H1 (cell line): ENCODE measurements at regions of chr4 and their contacts with region 1.

Region 1: DNA sequence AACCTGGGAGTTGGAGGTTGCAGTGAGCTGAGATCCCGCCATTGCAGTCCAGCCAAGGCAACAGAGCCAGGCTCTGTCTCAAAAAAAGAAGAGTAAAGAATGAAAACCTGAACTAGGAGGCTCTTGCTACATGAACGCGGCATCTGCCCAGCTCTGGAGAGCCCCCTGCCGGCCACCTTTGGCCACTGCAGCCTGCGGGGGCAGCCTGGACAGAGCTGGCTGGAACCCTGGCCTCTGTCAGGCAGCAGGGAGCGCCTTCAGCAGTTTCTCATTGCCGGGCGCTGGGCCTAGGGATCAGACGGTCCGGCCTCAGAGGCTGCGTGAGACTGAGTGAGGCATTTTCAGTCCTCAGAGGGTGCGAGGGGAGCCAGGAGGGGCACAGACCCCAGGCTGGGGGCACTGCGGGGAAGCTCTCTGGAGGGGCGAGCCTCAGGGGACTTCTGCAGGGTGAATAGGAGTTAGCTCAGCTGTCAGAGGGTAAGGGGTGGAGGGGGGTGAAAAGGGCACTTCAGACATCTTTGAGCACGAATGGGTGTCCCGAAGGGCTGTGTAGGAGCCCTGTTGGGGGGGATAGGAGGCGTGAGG is 17.5 kb downstream of the DOK7 start:
- DNase-seq: peak; percentile 66 to 100
- H3K4me3 ChIP-seq: peak overlapping the region in 2 of 4 experiments; percentile 23 to 49; a peak in 4 of 8 replicates
- H3K27ac ChIP-seq: no peak overlapping the region
- H3K4me1 ChIP-seq: peaks cover 0 to 30% (median 22%) of the 10 kb centered on the region in 4 experiments; a peak in 6 of 7 replicates
- H3K27me3 ChIP-seq: peaks cover 7 to 69% (median 48%) of the 10 kb centered on the region in 4 experiments
- CTCF ChIP-seq: peak in 2 of 3 experiments; percentile 97 to 98; a peak in 3 of 4 replicates
- EP300 ChIP-seq: no peak
- POLR2A ChIP-seq: no peak
- RAD21 ChIP-seq: peak; percentile 78 to 88

Region 2: GRCh38 chr4:3179126-3179706 is 301.4 kb before region 1 on chr4:
- CTCF ChIA-PET with region 1: no interaction called
- POLR2A ChIA-PET with region 1: no interaction called
- DNase-seq: no peak
- H3K4me3 ChIP-seq: no peak overlapping the region
- H3K27ac ChIP-seq: no peak overlapping the region
- H3K4me1 ChIP-seq: no peaks in the 10 kb centered on the region
- H3K27me3 ChIP-seq: no peaks in the 10 kb centered on the region
- CTCF ChIP-seq: no peak
- EP300 ChIP-seq: no peak
- POLR2A ChIP-seq: no peak
- RAD21 ChIP-seq: no peak

Region 3: GRCh38 chr4:3318561-3319021 is 162.0 kb before region 1 on chr4:
- CTCF ChIA-PET with region 1: interaction called, 16 read pairs
- POLR2A ChIA-PET with region 1: no interaction called
- DNase-seq: peak; percentile 54 to 91
- H3K4me3 ChIP-seq: no peak overlapping the region
- H3K27ac ChIP-seq: 0 out of 2 replicates have a peak overlapping the region, but pooled peaks have one; percentile 39
- H3K4me1 ChIP-seq: peaks cover 0 to 5% (median 1%) of the 10 kb centered on the region in 4 experiments; a peak in 2 of 7 replicates
- H3K27me3 ChIP-seq: no peaks in the 10 kb centered on the region
- CTCF ChIP-seq: peak in 2 of 3 experiments; percentile 99; a peak in 3 of 4 replicates
- EP300 ChIP-seq: peak in 1 of 2 experiments; percentile 55; a peak in 1 of 3 replicates
- POLR2A ChIP-seq: no peak
- RAD21 ChIP-seq: peak; percentile 73 to 78

Region 4: GRCh38 chr4:3418029-3418762 is 62.4 kb before region 1 on chr4:
- CTCF ChIA-PET with region 1: interaction called, 31 read pairs
- POLR2A ChIA-PET with region 1: interaction called, 3 read pairs
- DNase-seq: no peak
- H3K4me3 ChIP-seq: no peak overlapping the region
- H3K27ac ChIP-seq: no peak overlapping the region
- H3K4me1 ChIP-seq: no peaks in the 10 kb centered on the region; a peak in 3 of 7 replicates
- H3K27me3 ChIP-seq: no peaks in the 10 kb centered on the region
- CTCF ChIP-seq: peak in 2 of 3 experiments; percentile 45 to 74; a peak in 3 of 4 replicates
- EP300 ChIP-seq: no peak
- POLR2A ChIP-seq: no peak
- RAD21 ChIP-seq: peak; percentile 32 to 43; a peak in 3 of 4 replicates

Region 5: GRCh38 chr4:3442959-3443749 is 37.5 kb before region 1 on chr4:
- CTCF ChIA-PET with region 1: interaction called, 40 read pairs
- POLR2A ChIA-PET with region 1: no interaction called
- DNase-seq: peak in 1 of 2 experiments; percentile 93
- H3K4me3 ChIP-seq: no peak overlapping the region
- H3K27ac ChIP-seq: no peak overlapping the region
- H3K4me1 ChIP-seq: no peaks in the 10 kb centered on the region
- H3K27me3 ChIP-seq: no peaks in the 10 kb centered on the region
- CTCF ChIP-seq: peak in 2 of 3 experiments; percentile 96 to 97; a peak in 3 of 4 replicates
- EP300 ChIP-seq: no peak
- POLR2A ChIP-seq: no peak
- RAD21 ChIP-seq: peak; percentile 96 to 97

Region 6: GRCh38 chr4:3470244-3471097 is 10.1 kb before region 1 on chr4:
- CTCF ChIA-PET with region 1: interaction called, 48 read pairs
- POLR2A ChIA-PET with region 1: interaction called, 4 read pairs
- DNase-seq: no peak
- H3K4me3 ChIP-seq: no peak overlapping the region
- H3K27ac ChIP-seq: no peak overlapping the region
- H3K4me1 ChIP-seq: peaks cover 0 to 3% (median 1%) of the 10 kb centered on the region in 4 experiments; a peak in 2 of 7 replicates
- H3K27me3 ChIP-seq: peaks cover 1 to 53% (median 34%) of the 10 kb centered on the region in 4 experiments; a peak in 6 of 7 replicates
- CTCF ChIP-seq: no peak
- EP300 ChIP-seq: no peak
- POLR2A ChIP-seq: no peak
- RAD21 ChIP-seq: no peak

Region 7: GRCh38 chr4:3514806-3515460 is 34.3 kb after region 1 on chr4:
- CTCF ChIA-PET with region 1: interaction called, 48 read pairs
- POLR2A ChIA-PET with region 1: interaction called, 4 read pairs
- DNase-seq: peak in 1 of 2 experiments; percentile 81
- H3K4me3 ChIP-seq: no peak overlapping the region
- H3K27ac ChIP-seq: no peak overlapping the region
- H3K4me1 ChIP-seq: 0 out of 7 replicates have a peak, but pooled peaks cover 0 to 2% (median under 1%) of the 10 kb centered on the region in 4 experiments
- H3K27me3 ChIP-seq: no peaks in the 10 kb centered on the region
- CTCF ChIP-seq: peak in 2 of 3 experiments; percentile 69 to 78; a peak in 3 of 4 replicates
- EP300 ChIP-seq: no peak
- POLR2A ChIP-seq: no peak
- RAD21 ChIP-seq: peak; percentile 57 to 67

Region 8: GRCh38 chr4:3605491-3605890 is 124.9 kb after region 1 on chr4:
- CTCF ChIA-PET with region 1: no interaction called
- POLR2A ChIA-PET with region 1: no interaction called
- DNase-seq: no peak
- H3K4me3 ChIP-seq: no peak overlapping the region
- H3K27ac ChIP-seq: no peak overlapping the region
- H3K4me1 ChIP-seq: no peaks in the 10 kb centered on the region
- H3K27me3 ChIP-seq: no peaks in the 10 kb centered on the region
- CTCF ChIP-seq: no peak
- EP300 ChIP-seq: no peak
- POLR2A ChIP-seq: no peak
- RAD21 ChIP-seq: no peak

Region 9: GRCh38 chr4:3776166-3777032 is 295.8 kb after region 1 on chr4:
- CTCF ChIA-PET with region 1: no interaction called
- POLR2A ChIA-PET with region 1: no interaction called
- DNase-seq: no peak
- H3K4me3 ChIP-seq: no peak overlapping the region
- H3K27ac ChIP-seq: no peak overlapping the region
- H3K4me1 ChIP-seq: peaks cover 0 to 5% (median 4%) of the 10 kb centered on the region in 4 experiments; a peak in 5 of 7 replicates
- H3K27me3 ChIP-seq: no peaks in the 10 kb centered on the region; a peak in 1 of 7 replicates
- CTCF ChIP-seq: no peak
- EP300 ChIP-seq: no peak
- POLR2A ChIP-seq: no peak
- RAD21 ChIP-seq: no peak